SK-N-SH (cell line): ENCODE measurements at regions of chr6 and their contacts with region 1.

Region 1: DNA sequence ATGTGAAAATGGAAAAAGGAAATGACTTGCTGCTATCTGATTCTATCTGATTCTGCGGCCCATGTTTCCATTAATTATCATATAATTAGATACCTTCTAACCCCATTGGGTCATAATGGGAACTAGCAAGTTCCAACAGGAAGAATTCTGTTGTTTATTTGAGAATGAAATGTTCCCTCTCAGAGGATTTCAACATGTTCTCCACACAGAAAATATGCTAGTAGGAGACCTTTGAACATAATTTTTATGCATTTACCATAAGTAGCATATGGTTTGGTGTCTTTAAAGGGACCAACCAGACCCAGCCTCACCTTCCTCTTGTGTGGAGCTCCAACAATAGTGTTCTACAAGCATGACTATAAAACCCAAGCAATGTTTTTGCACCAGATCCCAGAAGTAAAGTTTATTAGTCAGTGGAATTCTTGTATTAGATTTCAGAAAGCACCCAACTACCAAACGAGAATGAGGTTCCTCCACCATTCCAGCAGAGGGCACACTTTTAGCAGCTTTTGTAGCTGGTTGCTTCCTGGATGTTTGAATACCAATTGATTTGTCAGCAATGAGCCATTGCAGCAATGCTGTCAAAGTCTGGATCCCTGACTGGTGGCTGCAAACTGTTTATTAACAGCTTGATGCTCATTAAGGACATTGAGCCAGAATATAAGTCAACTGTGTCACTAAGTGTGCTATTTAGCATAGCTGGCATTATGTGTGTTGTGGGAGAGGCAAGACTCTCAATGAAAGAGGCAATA is 143.6 kb upstream of the GJE1 start:
- DNase-seq: peak; percentile 27
- H3K4me3 ChIP-seq: no peak overlapping the region; a peak in 1 of 4 replicates
- H3K27ac ChIP-seq: peak overlapping the region in 1 of 2 experiments; percentile 49; a peak in 1 of 4 replicates
- H3K4me1 ChIP-seq: 0 out of 4 replicates have a peak, but pooled peaks cover 0 to 3% of the 10 kb centered on the region in 2 experiments
- H3K27me3 ChIP-seq: no peaks in the 10 kb centered on the region
- CTCF ChIP-seq: peak; percentile 79
- EP300 ChIP-seq: no peak
- RAD21 ChIP-seq: peak; percentile 67

Region 2: DNA sequence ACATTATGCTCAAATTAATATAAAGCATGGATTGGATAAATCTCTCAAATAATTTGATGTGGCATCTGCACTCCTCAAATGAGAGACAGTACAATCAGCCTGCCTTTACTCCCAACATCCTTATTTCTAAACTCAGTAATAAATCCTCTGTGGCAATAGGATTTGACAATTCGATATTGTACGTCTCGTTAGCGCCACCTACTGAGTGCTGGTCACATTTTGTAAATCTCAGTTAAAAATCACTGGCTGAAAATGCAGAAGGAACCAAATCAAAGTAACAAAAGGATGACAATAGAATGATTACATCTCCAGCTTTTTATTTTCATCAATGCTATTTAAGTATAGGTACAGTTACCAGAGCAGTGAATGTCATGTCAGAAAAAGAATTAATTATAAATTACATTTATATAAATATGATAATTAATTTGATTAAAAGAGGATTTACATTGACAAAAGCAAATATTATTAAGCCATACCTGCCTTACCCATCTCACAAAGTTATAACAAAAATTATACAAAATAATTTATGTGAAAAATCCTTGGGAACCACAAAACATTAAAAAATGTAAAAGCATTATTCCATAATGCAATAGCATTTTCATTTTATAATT is 123.4 kb after region 1 on chr6:
- CTCF ChIA-PET with region 1: interaction called, 26 read pairs
- POLR2A ChIA-PET with region 1: no interaction called
- DNase-seq: peak; percentile 29
- H3K4me3 ChIP-seq: no peak overlapping the region
- H3K27ac ChIP-seq: no peak overlapping the region
- H3K4me1 ChIP-seq: no peaks in the 10 kb centered on the region
- H3K27me3 ChIP-seq: no peaks in the 10 kb centered on the region
- CTCF ChIP-seq: peak; percentile 81
- EP300 ChIP-seq: no peak
- RAD21 ChIP-seq: peak; percentile 80